Posterior vena cava (tissue), 2 donors: ENCODE measurements at regions of chr4 and their contacts with region 1.

Region 1: GRCh38 chr4:180655886-180656285 is 1587.3 kb upstream of the TENM3 start:
- DNase-seq: no peak

Region 2: GRCh38 chr4:180407275-180407885 is 248.5 kb before region 1 on chr4:
- intact Hi-C with region 1: no loop called
- DNase-seq: no peak

Region 3: GRCh38 chr4:180675359-180675650 is 19.4 kb after region 1 on chr4:
- intact Hi-C with region 1: loop called in 1 of 2 experiments (anchors 1 kb)
- DNase-seq: no peak